ENCODE measurements at regions of chr14 and their contacts with region 1.

Region 1: DNA sequence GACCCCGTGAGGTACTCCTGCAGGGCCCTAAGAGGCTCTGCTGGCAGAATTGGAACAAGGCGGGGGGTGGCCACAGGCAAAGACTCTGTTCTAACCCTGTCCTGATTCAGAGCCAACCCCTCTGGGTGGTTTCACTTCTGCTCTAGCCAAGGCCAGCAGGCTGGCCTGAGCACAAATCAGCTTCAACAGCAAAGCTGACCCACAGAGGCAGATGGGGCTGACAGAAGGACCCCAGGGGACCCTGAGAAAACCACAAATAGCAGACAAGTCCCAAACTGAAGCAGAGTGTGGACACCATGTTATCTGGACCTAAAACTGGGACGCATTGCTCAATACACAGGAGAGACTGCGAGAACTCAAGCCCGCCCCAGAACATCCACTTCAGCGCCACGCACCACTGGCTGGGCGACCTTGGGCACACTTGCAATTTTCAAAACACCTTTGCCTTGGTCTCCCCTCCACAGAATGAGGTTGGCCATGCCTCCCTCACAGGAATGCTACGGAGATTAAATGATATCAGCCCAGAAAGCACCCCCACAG is 76.4 kb upstream of the DICER1 start:
- DNase-seq: no peak
- H3K4me3 Mint-ChIP-seq: no peak overlapping the region
- H3K27ac Mint-ChIP-seq: no peak overlapping the region
- H3K4me1 Mint-ChIP-seq: no peaks in the 10 kb centered on the region
- H3K27me3 Mint-ChIP-seq: no peaks in the 10 kb centered on the region

Region 2: GRCh38 chr14:95361373-95362137 is 127.8 kb after region 1 on chr14:
- CTCF ChIA-PET with region 1: interaction called, 3 read pairs
- intact Hi-C with region 1: loop called (anchors 5 kb)
- DNase-seq: peak; percentile 59
- H3K4me3 Mint-ChIP-seq: no peak overlapping the region
- H3K27ac Mint-ChIP-seq: no peak overlapping the region
- H3K4me1 Mint-ChIP-seq: no peaks in the 10 kb centered on the region
- H3K27me3 Mint-ChIP-seq: peaks cover 34% of the 10 kb centered on the region